ENCODE measurements at regions of chr16 and their contacts with region 1.

Region 1: GRCh38 chr16:23280483-23280967 is 21.6 kb upstream of the SCNN1B start:
- DNase-seq: peak; percentile 90
- H3K4me3 ChIP-seq: no peak overlapping the region
- H3K27ac ChIP-seq: peak overlapping the region; percentile 76
- H3K4me1 ChIP-seq: peaks cover 58% of the 10 kb centered on the region
- H3K27me3 ChIP-seq: no peaks in the 10 kb centered on the region
- CTCF ChIP-seq: no peak

Region 2: DNA sequence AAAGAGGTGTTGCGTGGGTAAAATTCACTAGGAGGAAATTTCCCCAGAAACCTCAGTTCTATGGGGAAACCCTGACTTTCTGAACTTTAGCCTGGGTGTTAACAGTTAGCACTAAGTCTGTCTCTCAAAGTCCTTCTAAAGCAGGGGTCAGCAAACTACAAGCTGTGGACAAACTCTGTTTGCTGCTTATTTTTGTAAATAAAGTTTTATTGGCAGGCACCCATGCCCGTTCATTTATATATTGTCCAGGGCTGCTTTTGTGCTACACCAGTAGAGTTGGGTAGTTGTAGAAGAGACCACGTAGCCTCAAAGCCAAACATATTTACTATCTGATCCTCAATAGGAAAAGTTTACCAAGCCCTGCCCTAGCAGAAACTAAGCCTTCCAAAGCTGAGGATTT is 290.9 kb before region 1 on chr16:
- CTCF ChIA-PET with region 1: no interaction called
- dilution Hi-C with region 1: no loop called
- in situ Hi-C with region 1: no loop called
- intact Hi-C with region 1: no loop called
- DNase-seq: no peak
- H3K4me3 ChIP-seq: no peak overlapping the region
- H3K27ac ChIP-seq: no peak overlapping the region
- H3K4me1 ChIP-seq: no peaks in the 10 kb centered on the region
- H3K27me3 ChIP-seq: no peaks in the 10 kb centered on the region
- CTCF ChIP-seq: no peak

Region 3: GRCh38 chr16:23194497-23195221 is 85.9 kb before region 1 on chr16:
- CTCF ChIA-PET with region 1: no interaction called
- dilution Hi-C with region 1: loop called (anchors 5 kb)
- in situ Hi-C with region 1: no loop called
- intact Hi-C with region 1: no loop called
- DNase-seq: no peak
- H3K4me3 ChIP-seq: no peak overlapping the region
- H3K27ac ChIP-seq: no peak overlapping the region
- H3K4me1 ChIP-seq: no peaks in the 10 kb centered on the region
- H3K27me3 ChIP-seq: no peaks in the 10 kb centered on the region
- CTCF ChIP-seq: no peak

Region 4: GRCh38 chr16:23248261-23249194 is 32.0 kb before region 1 on chr16:
- CTCF ChIA-PET with region 1: no interaction called
- dilution Hi-C with region 1: loop called (anchors 5 kb)
- in situ Hi-C with region 1: no loop called
- intact Hi-C with region 1: loop called (anchors 5 kb)
- DNase-seq: peak; percentile 79
- H3K4me3 ChIP-seq: no peak overlapping the region
- H3K27ac ChIP-seq: peak overlapping the region; percentile 7
- H3K4me1 ChIP-seq: peaks cover 12% of the 10 kb centered on the region
- H3K27me3 ChIP-seq: no peaks in the 10 kb centered on the region
- CTCF ChIP-seq: no peak

Region 5: GRCh38 chr16:23342083-23342640 is 61.6 kb after region 1 on chr16:
- CTCF ChIA-PET with region 1: no interaction called
- dilution Hi-C with region 1: loop called (anchors 5 kb)
- in situ Hi-C with region 1: no loop called
- intact Hi-C with region 1: no loop called
- DNase-seq: no peak
- H3K4me3 ChIP-seq: no peak overlapping the region
- H3K27ac ChIP-seq: no peak overlapping the region
- H3K4me1 ChIP-seq: peaks cover 7% of the 10 kb centered on the region
- H3K27me3 ChIP-seq: no peaks in the 10 kb centered on the region
- CTCF ChIP-seq: no peak

Region 6: DNA sequence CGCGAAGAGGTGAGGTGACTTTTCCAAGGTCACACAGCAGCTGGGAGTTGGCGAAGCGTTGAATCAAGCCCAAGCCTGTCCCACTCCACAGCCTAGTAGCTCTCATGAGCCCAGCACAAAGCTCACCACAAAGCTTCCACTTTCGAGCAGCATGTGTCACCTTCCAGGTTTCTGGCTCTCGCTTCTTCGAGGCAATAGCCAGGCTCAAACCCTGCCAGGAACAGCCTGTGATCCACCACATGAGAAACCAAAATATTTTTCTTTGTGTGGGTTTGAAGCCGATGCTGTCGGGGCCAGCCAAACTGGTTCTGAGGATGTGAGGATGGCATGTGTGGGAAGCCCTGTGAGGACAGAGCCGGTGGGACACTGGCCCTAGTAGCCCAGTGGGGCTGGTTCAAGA is 104.4 kb after region 1 on chr16:
- CTCF ChIA-PET with region 1: no interaction called
- dilution Hi-C with region 1: loop called (anchors 5 kb)
- in situ Hi-C with region 1: no loop called
- intact Hi-C with region 1: no loop called
- DNase-seq: peak; percentile 96
- H3K4me3 ChIP-seq: no peak overlapping the region
- H3K27ac ChIP-seq: no peak overlapping the region
- H3K4me1 ChIP-seq: peaks cover 5% of the 10 kb centered on the region
- H3K27me3 ChIP-seq: no peaks in the 10 kb centered on the region
- CTCF ChIP-seq: no peak